ENCODE measurements at regions of chr18 and their contacts with region 1.

Region 1: GRCh38 chr18:2805970-2806943 is 40.5 kb upstream of the EMILIN2 start:
- DNase-seq: no peak
- H3K4me3 ChIP-seq: no peak overlapping the region
- H3K4me3 Mint-ChIP-seq: no peak overlapping the region
- H3K27ac ChIP-seq: no peak overlapping the region
- H3K27ac Mint-ChIP-seq: peak overlapping the region in 3 of 7 donors; percentile 31 to 77 (median 71)
- H3K4me1 ChIP-seq: no peaks in the 10 kb centered on the region
- H3K4me1 Mint-ChIP-seq: peaks cover 0 to 1% (median 0%) of the 10 kb centered on the region in 4 donors
- H3K27me3 ChIP-seq: no peaks in the 10 kb centered on the region
- H3K27me3 Mint-ChIP-seq: no peaks in the 10 kb centered on the region

Region 2: GRCh38 chr18:2889761-2890192 is 83.5 kb after region 1 on chr18:
- CTCF ChIA-PET with region 1: no interaction called
- POLR2A ChIA-PET with region 1: no interaction called
- intact Hi-C with region 1: loop called (anchors 5 kb)
- DNase-seq: peak; percentile 67 to 81 (median 76)
- H3K4me3 ChIP-seq: no peak overlapping the region
- H3K4me3 Mint-ChIP-seq: peak overlapping the region in 7 of 8 donors; percentile 4 to 90 (median 68)
- H3K27ac ChIP-seq: peak overlapping the region; percentile 49
- H3K27ac Mint-ChIP-seq: peak overlapping the region; percentile 83 to 98 (median 96)
- H3K4me1 ChIP-seq: peaks cover 54% of the 10 kb centered on the region
- H3K4me1 Mint-ChIP-seq: peaks cover 41 to 71% (median 56%) of the 10 kb centered on the region in 4 donors
- H3K27me3 ChIP-seq: no peaks in the 10 kb centered on the region
- H3K27me3 Mint-ChIP-seq: no peaks in the 10 kb centered on the region

Region 3: DNA sequence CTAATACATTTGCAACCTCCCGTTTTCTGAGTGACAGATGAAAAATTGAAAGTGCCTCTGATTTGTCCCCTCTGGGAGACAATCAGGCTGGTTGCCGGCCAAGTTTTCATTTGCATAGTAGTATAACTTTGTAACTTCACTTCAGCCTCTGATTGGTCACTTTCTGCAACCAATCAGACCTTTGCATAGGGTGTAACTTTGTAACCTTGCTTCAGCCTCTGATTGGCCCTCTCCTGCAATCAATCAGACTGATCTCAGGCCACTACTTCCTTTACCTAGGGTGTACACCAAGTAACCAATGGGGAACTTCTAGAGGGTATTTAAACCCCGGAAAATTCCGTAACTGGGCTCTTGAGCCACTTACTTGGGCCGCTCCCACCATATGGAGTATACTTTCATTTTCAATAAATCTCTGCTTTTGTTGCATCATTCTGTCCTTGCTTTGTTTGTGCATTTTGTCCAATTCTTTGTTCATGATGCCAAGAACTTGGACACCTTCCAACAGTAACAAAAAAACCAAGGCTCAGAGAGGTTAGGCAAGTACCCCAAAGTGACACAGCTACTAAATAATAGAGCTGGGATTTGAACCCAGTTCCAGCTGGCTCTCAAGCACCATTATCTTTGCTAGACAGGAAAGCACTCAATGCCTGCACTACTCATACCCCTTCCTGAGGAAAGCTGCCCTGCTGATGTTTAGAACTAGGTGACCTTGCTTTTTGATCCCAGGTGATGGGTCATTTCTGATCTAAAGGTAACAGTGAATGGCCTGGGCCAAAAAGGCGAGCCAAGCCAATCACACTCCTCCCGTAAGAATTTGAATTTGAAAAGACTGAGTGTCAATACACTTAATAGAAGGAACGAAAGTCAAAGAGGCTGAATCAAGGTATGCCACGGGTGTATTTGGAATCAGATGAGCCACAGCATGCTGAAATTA is 424.4 kb after region 1 on chr18:
- CTCF ChIA-PET with region 1: no interaction called
- POLR2A ChIA-PET with region 1: no interaction called
- intact Hi-C with region 1: no loop called
- DNase-seq: no peak
- H3K4me3 ChIP-seq: no peak overlapping the region
- H3K4me3 Mint-ChIP-seq: peak overlapping the region in 1 of 8 donors; percentile 5
- H3K27ac ChIP-seq: no peak overlapping the region
- H3K27ac Mint-ChIP-seq: peak overlapping the region in 1 of 7 donors; percentile 35
- H3K4me1 ChIP-seq: no peaks in the 10 kb centered on the region
- H3K4me1 Mint-ChIP-seq: peaks cover 0 to 1% (median 0%) of the 10 kb centered on the region in 4 donors
- H3K27me3 ChIP-seq: no peaks in the 10 kb centered on the region
- H3K27me3 Mint-ChIP-seq: no peaks in the 10 kb centered on the region

Measured in CD4-positive, alpha-beta memory T cell (primary cell).